PC-9 (cell line): ENCODE measurements at regions of chr1 and their contacts with region 1.

Region 1: DNA sequence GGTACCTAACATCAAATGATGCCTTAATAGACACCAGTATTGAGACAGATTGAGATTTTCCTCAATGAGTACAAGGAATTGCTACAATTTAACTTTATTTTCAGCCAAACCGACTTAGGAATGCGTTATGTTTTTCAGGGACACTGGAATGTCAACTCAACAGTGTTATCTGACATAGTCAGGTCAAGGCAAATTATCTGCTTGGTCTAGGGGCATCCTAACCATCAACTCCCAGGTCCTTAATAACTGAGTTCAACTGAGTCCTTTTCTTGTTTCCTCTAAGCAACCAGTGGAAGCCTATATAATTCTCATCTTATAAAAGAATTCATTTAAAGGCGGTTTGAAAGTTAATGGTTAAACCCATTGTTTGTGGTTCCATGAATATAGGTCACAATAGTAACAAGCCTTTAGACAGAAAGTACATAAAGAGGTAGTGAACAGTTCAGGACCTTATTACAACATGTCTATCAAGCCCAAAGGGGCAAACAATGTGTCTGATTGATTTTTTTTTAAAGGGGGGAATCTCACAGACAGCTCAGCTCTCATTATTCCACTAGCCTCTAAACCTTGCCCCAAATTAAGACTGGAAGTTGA is 32.3 kb upstream of the NR5A2 start:
- DNase-seq: no peak
- H3K4me3 ChIP-seq: no peak overlapping the region
- H3K27ac ChIP-seq: no peak overlapping the region
- H3K4me1 ChIP-seq: no peaks in the 10 kb centered on the region
- H3K27me3 ChIP-seq: no peaks in the 10 kb centered on the region
- CTCF ChIP-seq: no peak

Region 2: GRCh38 chr1:199799116-199799515 is 196.1 kb before region 1 on chr1:
- CTCF ChIA-PET with region 1: no interaction called
- POLR2A ChIA-PET with region 1: no interaction called
- intact Hi-C with region 1: no loop called
- DNase-seq: no peak
- H3K4me3 ChIP-seq: no peak overlapping the region
- H3K27ac ChIP-seq: no peak overlapping the region
- H3K4me1 ChIP-seq: 0 out of 2 replicates have a peak, but pooled peaks cover under 1% of the 10 kb centered on the region
- H3K27me3 ChIP-seq: no peaks in the 10 kb centered on the region
- CTCF ChIP-seq: no peak

Region 3: GRCh38 chr1:199929556-199929955 is 65.6 kb before region 1 on chr1:
- CTCF ChIA-PET with region 1: no interaction called
- POLR2A ChIA-PET with region 1: no interaction called
- intact Hi-C with region 1: loop called (anchors 10 kb)
- DNase-seq: no peak
- H3K4me3 ChIP-seq: no peak overlapping the region
- H3K27ac ChIP-seq: no peak overlapping the region
- H3K4me1 ChIP-seq: no peaks in the 10 kb centered on the region
- H3K27me3 ChIP-seq: no peaks in the 10 kb centered on the region
- CTCF ChIP-seq: no peak